ENCODE measurements at regions of chr17 and their contacts with region 1.

Region 1: DNA sequence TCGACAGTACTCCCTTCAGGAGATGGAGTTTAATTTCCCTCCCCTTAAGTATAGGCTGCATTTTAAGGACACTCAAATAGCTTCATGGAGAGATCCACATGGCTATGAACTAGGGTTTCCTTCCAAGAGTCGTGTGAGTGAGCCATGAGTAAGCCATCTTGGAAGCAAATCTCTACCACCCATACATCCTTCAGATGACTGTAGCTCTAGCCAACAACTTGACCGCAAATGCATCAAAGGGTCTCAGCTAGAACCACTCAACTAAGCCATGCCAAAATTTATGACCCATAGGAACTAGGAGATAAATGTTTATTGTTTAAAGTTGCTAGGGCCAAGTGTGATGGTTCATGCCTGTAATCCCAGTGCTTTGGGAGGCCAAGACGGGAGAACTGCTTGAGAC is 43.4 kb downstream of the METTL16 start:
- DNase-seq: no peak
- ATAC-seq: no peak

Region 2: GRCh38 chr17:2292100-2292499 is 176.2 kb before region 1 on chr17:
- intact Hi-C with region 1: no loop called
- DNase-seq: no peak
- ATAC-seq: no peak

Region 3: DNA sequence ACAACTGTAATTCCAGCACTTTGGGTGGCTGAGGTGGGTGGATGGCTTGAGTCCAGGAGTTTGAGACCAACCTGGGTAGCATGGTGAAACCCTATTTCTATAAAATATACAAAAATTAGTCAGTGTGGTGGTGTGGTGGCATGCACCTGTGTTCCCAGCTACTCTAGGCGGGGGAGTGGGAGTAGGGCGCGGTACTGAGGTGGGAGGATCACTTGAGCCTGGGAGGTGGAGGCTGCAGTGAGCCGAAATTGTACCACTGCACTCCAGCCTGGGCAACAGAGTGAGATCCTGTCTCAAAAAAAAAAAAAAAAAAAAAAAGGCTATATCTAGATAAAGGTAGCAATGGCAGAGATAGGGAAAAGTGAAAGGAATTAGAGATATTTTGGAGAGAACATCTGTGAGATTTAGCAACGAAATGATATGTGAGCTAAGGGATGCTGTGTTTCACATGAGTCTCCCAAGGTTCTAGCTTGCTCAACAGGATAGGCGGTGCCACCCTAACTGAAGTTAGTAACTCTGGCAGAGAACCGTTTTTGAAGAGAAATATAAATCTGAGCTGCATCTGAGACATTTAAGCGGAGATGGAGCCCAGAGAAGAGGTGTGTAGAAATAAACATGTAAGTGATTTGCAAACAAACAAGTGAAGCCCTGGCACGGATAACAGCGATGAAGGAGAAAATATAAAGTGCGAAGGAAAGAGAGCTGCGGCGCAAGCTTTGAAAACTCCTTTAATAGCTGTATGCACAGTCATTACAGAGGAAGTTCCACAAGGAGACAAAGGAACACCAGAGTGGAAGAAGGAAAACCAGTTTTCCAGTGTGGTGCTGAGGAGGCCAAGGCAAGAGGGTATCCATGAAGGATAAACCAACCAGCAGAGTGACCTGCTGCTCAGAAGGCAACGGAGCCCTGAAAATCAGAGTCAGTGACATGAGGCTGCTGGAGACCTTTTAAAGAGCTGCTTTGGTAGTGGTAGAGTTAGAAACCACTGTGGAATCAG is 18.7 kb after region 1 on chr17:
- intact Hi-C with region 1: loop called (anchors 1 kb)
- DNase-seq: no peak
- ATAC-seq: no peak

Measured in sciatic nerve (tissue), 2 donors.